GM12878 (cell line): ENCODE measurements at regions of chrX and their contacts with region 1.

Region 1: DNA sequence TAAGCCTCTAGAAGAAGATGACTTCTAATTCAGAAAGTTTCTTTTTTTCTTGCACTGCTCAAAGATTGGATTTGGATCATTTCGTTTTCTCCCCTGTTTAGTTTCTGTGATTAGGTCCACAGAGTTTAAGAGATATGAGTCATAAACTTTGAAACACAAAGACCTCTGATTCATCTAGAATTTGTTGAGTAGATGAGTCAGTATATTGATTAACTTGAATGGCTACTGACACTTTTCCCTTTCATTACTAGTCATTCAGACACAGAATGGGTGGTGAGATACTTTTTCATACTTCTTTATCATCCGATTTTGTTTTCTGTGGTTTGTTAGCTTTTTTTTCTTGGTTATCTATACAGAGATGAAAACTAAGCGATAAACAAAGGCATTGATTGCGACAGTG is 34.1 kb upstream of the AFF2 start:
- DNase-seq: no peak
- ATAC-seq: peak; percentile 52
- H3K4me3 ChIP-seq: no peak overlapping the region
- H3K27ac ChIP-seq: no peak overlapping the region
- H3K4me1 ChIP-seq: no peaks in the 10 kb centered on the region
- H3K27me3 ChIP-seq: no peaks in the 10 kb centered on the region
- CTCF ChIP-seq: no peak
- EP300 ChIP-seq: no peak
- POLR2A ChIP-seq: no peak
- RAD21 ChIP-seq: no peak

Region 2: GRCh38 chrX:147715934-147716333 is 750.4 kb before region 1 on chrX:
- CTCF ChIA-PET with region 1: no interaction called
- POLR2A ChIA-PET with region 1: no interaction called
- RAD21 ChIA-PET with region 1: no interaction called
- SMC1A ChIA-PET with region 1: no interaction called
- in situ Hi-C with region 1: no loop called
- intact Hi-C with region 1: no loop called
- DNase-seq: no peak
- ATAC-seq: no peak
- H3K4me3 ChIP-seq: no peak overlapping the region
- H3K27ac ChIP-seq: no peak overlapping the region
- H3K4me1 ChIP-seq: no peaks in the 10 kb centered on the region
- H3K27me3 ChIP-seq: no peaks in the 10 kb centered on the region
- CTCF ChIP-seq: no peak
- EP300 ChIP-seq: no peak
- POLR2A ChIP-seq: no peak
- RAD21 ChIP-seq: no peak

Region 3: GRCh38 chrX:148593987-148594386 is 127.7 kb after region 1 on chrX:
- CTCF ChIA-PET with region 1: no interaction called
- POLR2A ChIA-PET with region 1: no interaction called
- RAD21 ChIA-PET with region 1: no interaction called
- SMC1A ChIA-PET with region 1: no interaction called
- in situ Hi-C with region 1: no loop called
- intact Hi-C with region 1: no loop called
- DNase-seq: no peak
- ATAC-seq: no peak
- H3K4me3 ChIP-seq: no peak overlapping the region
- H3K27ac ChIP-seq: no peak overlapping the region
- H3K4me1 ChIP-seq: no peaks in the 10 kb centered on the region
- H3K27me3 ChIP-seq: no peaks in the 10 kb centered on the region
- CTCF ChIP-seq: no peak
- EP300 ChIP-seq: no peak
- POLR2A ChIP-seq: no peak
- RAD21 ChIP-seq: no peak

Region 4: DNA sequence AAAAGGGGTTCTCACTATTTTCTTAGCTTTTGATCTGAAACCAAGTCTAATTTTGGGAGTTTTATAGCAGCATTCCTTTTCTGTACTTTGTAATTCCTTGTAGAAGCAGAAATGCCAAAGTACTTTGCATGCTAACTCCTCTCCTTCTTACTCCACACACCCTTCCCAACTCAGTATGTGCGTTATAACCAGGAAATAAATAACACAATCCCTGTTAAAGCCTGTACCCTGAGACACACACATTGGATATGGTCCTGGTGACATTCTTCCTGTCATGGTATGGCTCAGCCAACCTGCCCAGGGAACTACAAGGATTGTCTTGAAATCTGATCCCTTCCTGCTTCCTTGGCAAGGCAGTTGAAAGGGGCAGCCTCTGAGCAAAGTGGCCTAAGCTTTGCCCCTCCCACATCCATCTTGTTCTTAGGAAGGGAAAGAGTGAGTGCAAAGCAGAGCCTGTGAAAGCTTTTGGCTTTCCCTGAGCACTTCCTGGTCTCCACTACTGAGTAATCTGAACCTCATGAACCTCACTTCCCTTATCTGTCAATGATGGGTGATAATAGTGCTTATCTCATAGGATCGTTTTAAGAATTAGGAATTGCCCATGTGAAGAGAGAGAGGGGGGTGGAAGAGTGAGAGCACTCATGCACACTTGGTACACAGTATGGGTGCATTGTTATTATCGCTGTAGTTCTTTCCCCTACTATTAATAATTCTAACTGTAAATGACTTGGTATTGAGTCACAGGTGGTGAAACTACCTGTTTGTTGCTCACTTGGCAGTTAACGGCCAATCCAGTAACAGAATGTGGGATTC is 143.4 kb after region 1 on chrX:
- CTCF ChIA-PET with region 1: no interaction called
- POLR2A ChIA-PET with region 1: no interaction called
- RAD21 ChIA-PET with region 1: no interaction called
- SMC1A ChIA-PET with region 1: no interaction called
- in situ Hi-C with region 1: no loop called
- intact Hi-C with region 1: loop called (anchors 5 kb)
- DNase-seq: peak; percentile 40
- ATAC-seq: peak; percentile 90
- H3K4me3 ChIP-seq: peak overlapping the region; percentile 37
- H3K27ac ChIP-seq: peak overlapping the region; percentile 75
- H3K4me1 ChIP-seq: peaks cover 13% of the 10 kb centered on the region
- H3K27me3 ChIP-seq: no peaks in the 10 kb centered on the region
- CTCF ChIP-seq: no peak
- EP300 ChIP-seq: peak in 1 of 2 experiments; percentile 2; a peak in 1 of 4 replicates
- POLR2A ChIP-seq: no peak
- RAD21 ChIP-seq: no peak